PC-9 (cell line): ENCODE measurements at regions of chr10 and their contacts with region 1.

Region 1: GRCh38 chr10:131885391-131886161 is 15.2 kb upstream of the PPP2R2D start:
- DNase-seq: peak; percentile 43 to 65
- H3K4me3 ChIP-seq: no peak overlapping the region
- H3K27ac ChIP-seq: no peak overlapping the region
- H3K4me1 ChIP-seq: peaks cover 10% of the 10 kb centered on the region; the same call in 1 of the 2 replicates
- H3K27me3 ChIP-seq: 0 out of 2 replicates have a peak, but pooled peaks cover 6% of the 10 kb centered on the region
- CTCF ChIP-seq: peak; percentile 81

Region 2: DNA sequence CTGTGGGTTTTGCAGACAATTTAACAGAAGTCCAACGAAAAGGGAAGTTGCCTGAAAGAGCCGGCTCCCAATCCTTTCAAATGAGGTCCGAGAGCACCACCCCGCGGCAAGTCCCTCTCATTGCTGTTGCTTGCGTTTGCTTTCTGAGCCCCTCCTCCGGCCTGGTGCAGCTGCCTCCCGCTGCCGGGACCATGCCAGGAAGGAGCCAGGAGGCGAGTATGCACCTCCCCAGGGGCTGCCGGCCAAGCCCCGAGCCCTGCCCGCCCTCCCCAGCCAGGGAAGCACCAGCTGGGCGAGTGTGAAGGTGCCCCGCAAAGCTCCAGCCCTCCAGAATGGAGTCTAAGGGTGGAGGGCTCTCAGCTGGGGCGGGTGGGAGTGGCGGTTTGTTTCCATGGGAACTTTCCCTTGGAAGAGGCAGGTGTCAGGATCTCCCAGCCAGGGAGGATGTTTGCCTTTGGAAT is 10.6 kb before region 1 on chr10:
- CTCF ChIA-PET with region 1: no interaction called
- POLR2A ChIA-PET with region 1: no interaction called
- intact Hi-C with region 1: no loop called
- DNase-seq: peak; percentile 41 to 67
- H3K4me3 ChIP-seq: no peak overlapping the region
- H3K27ac ChIP-seq: no peak overlapping the region
- H3K4me1 ChIP-seq: no peaks in the 10 kb centered on the region
- H3K27me3 ChIP-seq: peaks cover 77% of the 10 kb centered on the region
- CTCF ChIP-seq: peak; percentile 73

Region 3: DNA sequence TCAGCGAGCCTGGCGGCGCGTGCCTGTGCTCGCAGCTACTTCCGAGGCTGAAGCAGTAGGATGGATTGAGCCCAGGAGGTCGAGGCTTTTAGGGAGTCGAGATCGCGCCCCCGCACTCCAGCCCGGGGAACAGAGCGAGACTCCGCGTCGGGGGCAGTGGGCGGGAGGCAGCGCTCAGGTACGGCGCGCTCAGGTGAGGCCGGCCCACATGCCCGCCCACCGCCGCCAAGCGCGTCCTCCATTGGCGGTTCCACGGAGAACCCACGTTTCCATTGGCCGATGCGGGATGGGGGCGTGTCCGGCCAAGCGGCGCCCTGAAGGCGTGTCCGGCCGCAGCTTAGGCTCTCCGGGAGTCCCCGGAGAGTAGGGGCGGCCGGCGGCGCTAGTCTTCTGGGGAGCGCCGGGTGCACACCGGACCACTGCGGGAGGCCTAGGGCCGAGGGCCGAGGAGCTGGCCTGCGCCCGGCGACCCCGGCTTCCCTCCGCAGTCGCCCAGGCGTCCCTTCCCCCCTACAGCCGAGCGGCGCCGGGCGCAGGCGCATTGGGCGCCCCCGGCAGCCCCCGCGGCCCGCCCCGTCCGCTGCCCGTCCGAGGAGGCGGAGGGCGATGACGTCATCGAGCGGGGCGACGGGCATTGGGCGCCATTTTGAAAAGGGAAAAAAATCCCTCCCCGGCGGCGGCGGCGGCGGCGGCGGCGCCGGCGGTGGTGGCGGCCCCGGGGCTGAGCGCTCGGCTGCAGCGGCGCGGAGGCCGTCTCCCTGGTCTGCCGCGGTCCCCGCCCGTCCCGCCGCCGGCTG is 15.0 kb after region 1 on chr10 and contains the start of gene PPP2R2D:
- CTCF ChIA-PET with region 1: no interaction called
- POLR2A ChIA-PET with region 1: interaction called, 8 read pairs
- intact Hi-C with region 1: loop called (anchors 1 kb)
- DNase-seq: peak; percentile 83 to 92
- H3K4me3 ChIP-seq: peak within 1 kb of the TSS; percentile 79
- H3K27ac ChIP-seq: no peak within 1 kb of the TSS
- H3K4me1 ChIP-seq: peaks cover 29% of the 10 kb centered on the region
- H3K27me3 ChIP-seq: no peaks in the 10 kb centered on the region; the same call in 1 of the 2 replicates
- CTCF ChIP-seq: no peak
- total RNA-seq, gene PPP2R2D: 23.5 TPM in 2 replicates

Region 4: GRCh38 chr10:131928248-131929095 is 42.9 kb after region 1 on chr10:
- CTCF ChIA-PET with region 1: no interaction called
- POLR2A ChIA-PET with region 1: no interaction called
- intact Hi-C with region 1: no loop called
- DNase-seq: no peak
- H3K4me3 ChIP-seq: no peak overlapping the region
- H3K27ac ChIP-seq: no peak overlapping the region
- H3K4me1 ChIP-seq: no peaks in the 10 kb centered on the region
- H3K27me3 ChIP-seq: no peaks in the 10 kb centered on the region
- CTCF ChIP-seq: no peak

Region 5: DNA sequence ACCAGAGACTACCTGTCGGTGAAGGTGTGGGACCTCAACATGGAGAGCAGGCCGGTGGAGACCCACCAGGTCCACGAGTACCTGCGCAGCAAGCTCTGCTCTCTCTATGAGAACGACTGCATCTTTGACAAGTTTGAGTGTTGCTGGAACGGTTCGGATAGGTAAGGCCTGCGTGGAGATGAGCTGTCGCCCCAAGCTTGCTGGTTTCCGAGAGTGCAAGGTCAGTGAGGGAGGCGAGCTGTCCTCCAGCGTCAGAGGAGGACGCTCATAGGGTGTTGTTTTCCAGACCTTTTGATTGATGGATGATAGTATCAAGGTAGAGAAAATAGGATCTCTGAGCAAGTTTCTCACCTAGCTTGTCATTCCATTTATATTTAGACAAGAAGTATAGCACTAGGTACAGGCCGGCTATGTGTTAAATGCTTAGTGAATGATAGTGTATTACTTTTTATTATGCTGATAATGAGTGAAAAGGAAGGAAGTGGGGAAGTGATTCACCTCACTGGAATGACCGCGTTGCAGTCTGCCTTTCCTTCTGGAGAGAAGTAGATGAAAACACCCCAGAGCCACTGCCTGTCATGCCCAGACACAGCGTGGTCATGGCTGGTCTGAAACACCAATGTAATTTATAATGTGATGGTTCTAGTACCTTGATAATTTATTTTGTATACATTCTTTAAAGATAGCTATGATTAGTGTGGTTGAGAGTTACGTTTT is 62.2 kb after region 1 on chr10:
- CTCF ChIA-PET with region 1: interaction called, 3 read pairs
- POLR2A ChIA-PET with region 1: no interaction called
- intact Hi-C with region 1: loop called (anchors 5 kb)
- DNase-seq: peak in 1 of 2 experiments; percentile 48
- H3K4me3 ChIP-seq: no peak overlapping the region
- H3K27ac ChIP-seq: no peak overlapping the region
- H3K4me1 ChIP-seq: no peaks in the 10 kb centered on the region
- H3K27me3 ChIP-seq: no peaks in the 10 kb centered on the region
- CTCF ChIP-seq: no peak

Region 6: DNA sequence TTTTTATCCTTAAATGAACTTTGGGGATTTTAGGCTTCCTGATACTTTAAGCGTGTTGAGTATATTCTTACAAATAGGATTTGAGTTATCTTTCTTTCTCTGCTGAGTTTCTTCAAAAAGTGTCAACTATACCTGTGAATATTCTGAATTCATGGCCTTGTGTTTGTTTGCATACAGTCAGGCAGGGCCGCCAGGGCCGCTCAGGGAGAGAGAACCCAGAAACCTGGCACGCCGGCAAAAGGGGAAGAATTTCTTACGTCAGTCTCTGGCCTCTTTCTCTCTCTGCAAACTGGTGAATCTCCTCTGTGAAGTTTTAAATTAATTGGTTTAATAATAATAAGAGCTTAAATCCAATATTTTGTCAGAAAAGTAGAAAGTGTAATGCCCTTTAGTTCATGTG is 125.4 kb after region 1 on chr10:
- CTCF ChIA-PET with region 1: interaction called, 16 read pairs
- POLR2A ChIA-PET with region 1: no interaction called
- intact Hi-C with region 1: no loop called
- DNase-seq: no peak
- H3K4me3 ChIP-seq: no peak overlapping the region
- H3K27ac ChIP-seq: no peak overlapping the region
- H3K4me1 ChIP-seq: no peaks in the 10 kb centered on the region
- H3K27me3 ChIP-seq: no peaks in the 10 kb centered on the region; the same call in 1 of the 2 replicates
- CTCF ChIP-seq: no peak

Region 7: GRCh38 chr10:132023092-132023811 is 137.7 kb after region 1 on chr10:
- CTCF ChIA-PET with region 1: no interaction called
- POLR2A ChIA-PET with region 1: no interaction called
- intact Hi-C with region 1: loop called (anchors 2 kb)
- DNase-seq: peak in 1 of 2 experiments; percentile 63
- H3K4me3 ChIP-seq: no peak overlapping the region
- H3K27ac ChIP-seq: no peak overlapping the region
- H3K4me1 ChIP-seq: no peaks in the 10 kb centered on the region
- H3K27me3 ChIP-seq: 0 out of 2 replicates have a peak, but pooled peaks cover 13% of the 10 kb centered on the region
- CTCF ChIP-seq: peak; percentile 76